A549 (cell line): ENCODE measurements at regions of chr3 and their contacts with region 1.

Region 1: GRCh38 chr3:58008140-58009025 is at the start of gene FLNB:
- DNase-seq: peak; percentile 65 to 79
- ATAC-seq: peak; percentile 64
- H3K4me3 ChIP-seq: peak within 1 kb of the TSS; percentile 99
- H3K27ac ChIP-seq: peak within 1 kb of the TSS; percentile 84 to 97
- H3K4me1 ChIP-seq: peaks cover 38% of the 10 kb centered on the region
- CTCF ChIP-seq: peak; percentile 68
- EP300 ChIP-seq: no peak
- POLR2A ChIP-seq: peak; percentile 93
- RAD21 ChIP-seq: peak; percentile 52 to 85; a peak in 4 of 5 replicates
- polyA plus RNA-seq, gene FLNB: 387 and 439 TPM in 2 replicates

Region 2: DNA sequence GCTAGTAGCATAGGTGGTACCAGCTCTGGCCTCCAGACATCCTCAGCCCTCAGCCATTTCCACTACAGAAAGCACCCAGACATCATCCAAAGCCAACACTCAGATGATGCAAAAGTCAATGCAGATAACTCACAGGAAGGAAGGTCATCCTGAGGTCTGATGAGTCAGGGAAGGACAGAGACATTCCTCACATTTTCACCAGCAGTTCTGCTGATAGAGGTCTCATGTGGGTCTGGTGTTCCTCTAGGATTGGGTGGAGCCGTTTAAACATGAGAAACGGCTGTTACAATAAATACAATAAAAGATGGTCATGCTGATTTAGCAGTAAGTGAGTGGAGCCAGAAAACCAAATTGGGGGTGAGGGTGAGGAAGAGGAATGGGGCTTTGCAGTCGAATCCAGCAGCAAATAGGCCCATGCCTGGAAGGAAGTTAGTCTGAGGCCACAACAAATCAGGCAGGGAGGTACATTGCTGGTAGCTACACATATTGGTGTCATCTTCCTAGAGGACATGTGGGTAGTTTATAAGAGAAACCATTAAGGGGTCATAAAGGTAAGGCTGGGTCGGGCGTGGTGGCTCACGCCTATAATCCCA is 33.5 kb before region 1 on chr3:
- CTCF ChIA-PET with region 1: interaction called, 18 read pairs
- POLR2A ChIA-PET with region 1: interaction called, 5 read pairs
- DNase-seq: peak; percentile 85 to 98
- ATAC-seq: peak; percentile 79 to 81
- H3K4me3 ChIP-seq: no peak overlapping the region
- H3K27ac ChIP-seq: peak overlapping the region; percentile 92 to 98
- H3K4me1 ChIP-seq: peaks cover 91% of the 10 kb centered on the region
- CTCF ChIP-seq: no peak
- EP300 ChIP-seq: peak; percentile 92 to 93; a peak in 4 of 5 replicates
- POLR2A ChIP-seq: no peak
- RAD21 ChIP-seq: peak; percentile 29 to 47; a peak in 2 of 5 replicates

Region 3: GRCh38 chr3:58020783-58021071 is 12.3 kb after region 1 on chr3:
- CTCF ChIA-PET with region 1: interaction called, 11 read pairs
- POLR2A ChIA-PET with region 1: interaction called, 3 read pairs
- DNase-seq: no peak
- ATAC-seq: no peak
- H3K4me3 ChIP-seq: no peak overlapping the region
- H3K27ac ChIP-seq: peak overlapping the region; percentile 12 to 83; a peak in 4 of 6 replicates
- H3K4me1 ChIP-seq: peaks cover 100% of the 10 kb centered on the region
- CTCF ChIP-seq: no peak
- EP300 ChIP-seq: no peak
- POLR2A ChIP-seq: no peak
- RAD21 ChIP-seq: no peak

Region 4: GRCh38 chr3:58059349-58060321 is 51.3 kb after region 1 on chr3:
- CTCF ChIA-PET with region 1: interaction called, 11 read pairs
- POLR2A ChIA-PET with region 1: interaction called, 12 read pairs
- DNase-seq: peak in 1 of 2 experiments; percentile 82
- ATAC-seq: peak; percentile 76 to 77; a peak in 5 of 6 replicates
- H3K4me3 ChIP-seq: peak overlapping the region; percentile 23; the same call in 1 of the 3 replicates
- H3K27ac ChIP-seq: peak overlapping the region; percentile 88 to 90
- H3K4me1 ChIP-seq: peaks cover 100% of the 10 kb centered on the region
- CTCF ChIP-seq: no peak
- EP300 ChIP-seq: peak in 1 of 2 experiments; percentile 57; a peak in 2 of 5 replicates
- POLR2A ChIP-seq: no peak
- RAD21 ChIP-seq: no peak

Region 5: DNA sequence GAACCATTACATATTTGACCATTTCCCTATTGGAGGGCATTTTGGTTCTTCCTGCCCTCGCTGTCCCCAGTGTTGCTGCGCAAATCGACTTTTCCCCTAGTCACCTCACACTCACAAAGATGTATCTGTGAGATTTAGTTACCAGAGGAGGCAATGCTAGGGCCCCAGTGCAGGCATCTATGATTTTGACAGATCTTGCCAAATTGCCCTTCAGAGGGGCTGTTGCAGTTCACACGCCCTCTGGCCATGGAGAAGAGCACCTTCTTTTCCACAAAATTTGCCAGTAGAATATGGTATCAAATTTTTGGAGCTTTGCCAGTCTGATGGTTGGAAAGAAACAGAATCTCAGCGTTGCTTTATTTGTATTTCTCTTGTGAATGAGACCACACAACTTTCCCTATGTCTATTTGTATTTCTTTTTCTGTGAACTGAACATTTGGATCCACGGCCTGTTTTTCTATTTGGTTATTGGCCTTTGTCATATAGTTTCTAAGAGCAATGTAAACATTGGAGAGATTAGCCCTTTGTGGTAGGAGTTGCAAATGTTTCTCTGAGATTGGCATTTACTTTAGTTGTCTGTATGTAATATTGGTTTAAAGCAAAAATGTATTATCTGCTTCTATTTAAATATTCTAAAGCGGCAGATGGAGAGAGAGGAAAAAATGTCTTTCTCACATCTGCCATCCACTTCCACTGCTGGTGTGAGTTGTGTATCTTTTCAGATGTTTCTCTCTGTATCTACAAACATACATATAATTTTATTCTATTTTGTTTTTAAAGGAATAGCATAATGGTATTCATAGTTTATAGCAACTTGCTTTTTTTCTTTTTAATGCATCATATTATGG is 136.3 kb after region 1 on chr3:
- CTCF ChIA-PET with region 1: no interaction called
- POLR2A ChIA-PET with region 1: no interaction called
- DNase-seq: no peak
- ATAC-seq: no peak
- H3K4me3 ChIP-seq: no peak overlapping the region
- H3K27ac ChIP-seq: peak overlapping the region in 1 of 2 experiments; percentile 37; a peak in 2 of 6 replicates
- H3K4me1 ChIP-seq: peaks cover 56% of the 10 kb centered on the region
- CTCF ChIP-seq: no peak
- EP300 ChIP-seq: no peak
- POLR2A ChIP-seq: no peak
- RAD21 ChIP-seq: no peak